SK-N-SH (cell line): ENCODE measurements at regions of chr17 and their contacts with region 1.

Region 1: GRCh38 chr17:36629252-36629847 is 28.0 kb downstream of the MRM1 start:
- DNase-seq: peak; percentile 89
- H3K4me3 ChIP-seq: peak overlapping the region in 1 of 2 experiments; percentile 55; a peak in 1 of 4 replicates
- H3K27ac ChIP-seq: no peak overlapping the region
- H3K4me1 ChIP-seq: peaks cover 0 to 18% of the 10 kb centered on the region in 2 experiments; a peak in 1 of 4 replicates
- H3K27me3 ChIP-seq: no peaks in the 10 kb centered on the region
- CTCF ChIP-seq: peak; percentile 96
- EP300 ChIP-seq: no peak
- RAD21 ChIP-seq: peak; percentile 98

Region 2: DNA sequence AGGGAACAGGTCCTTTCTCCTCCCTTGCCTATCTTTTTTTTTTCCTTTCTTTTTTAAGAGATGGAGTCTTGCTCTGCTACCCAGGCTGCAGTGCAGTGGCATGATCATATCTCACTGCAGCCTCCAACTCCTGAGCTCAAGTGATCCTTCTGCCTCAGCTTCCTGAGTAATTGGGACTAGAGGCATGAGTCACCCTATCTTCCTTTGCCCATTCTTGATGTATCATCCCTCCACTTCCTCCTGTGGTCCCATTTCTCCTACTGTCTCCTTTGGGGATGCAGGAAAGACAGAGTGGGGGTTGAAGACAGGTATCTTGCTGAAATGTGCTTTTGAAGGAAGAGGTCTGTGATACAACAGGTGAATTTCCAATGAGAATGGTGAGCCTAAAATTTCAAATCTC is 100.2 kb before region 1 on chr17:
- CTCF ChIA-PET with region 1: no interaction called
- POLR2A ChIA-PET with region 1: no interaction called
- DNase-seq: no peak
- H3K4me3 ChIP-seq: no peak overlapping the region
- H3K27ac ChIP-seq: peak overlapping the region in 1 of 2 experiments; percentile 43; a peak in 2 of 4 replicates
- H3K4me1 ChIP-seq: peaks cover 0 to 8% of the 10 kb centered on the region in 2 experiments; a peak in 2 of 4 replicates
- H3K27me3 ChIP-seq: no peaks in the 10 kb centered on the region
- CTCF ChIP-seq: no peak
- EP300 ChIP-seq: no peak
- RAD21 ChIP-seq: no peak

Region 3: GRCh38 chr17:36611345-36612072 is 17.8 kb before region 1 on chr17:
- CTCF ChIA-PET with region 1: interaction called, 50 read pairs
- POLR2A ChIA-PET with region 1: no interaction called
- DNase-seq: no peak
- H3K4me3 ChIP-seq: no peak overlapping the region
- H3K27ac ChIP-seq: no peak overlapping the region
- H3K4me1 ChIP-seq: no peaks in the 10 kb centered on the region
- H3K27me3 ChIP-seq: no peaks in the 10 kb centered on the region
- CTCF ChIP-seq: no peak
- EP300 ChIP-seq: no peak
- RAD21 ChIP-seq: no peak

Region 4: DNA sequence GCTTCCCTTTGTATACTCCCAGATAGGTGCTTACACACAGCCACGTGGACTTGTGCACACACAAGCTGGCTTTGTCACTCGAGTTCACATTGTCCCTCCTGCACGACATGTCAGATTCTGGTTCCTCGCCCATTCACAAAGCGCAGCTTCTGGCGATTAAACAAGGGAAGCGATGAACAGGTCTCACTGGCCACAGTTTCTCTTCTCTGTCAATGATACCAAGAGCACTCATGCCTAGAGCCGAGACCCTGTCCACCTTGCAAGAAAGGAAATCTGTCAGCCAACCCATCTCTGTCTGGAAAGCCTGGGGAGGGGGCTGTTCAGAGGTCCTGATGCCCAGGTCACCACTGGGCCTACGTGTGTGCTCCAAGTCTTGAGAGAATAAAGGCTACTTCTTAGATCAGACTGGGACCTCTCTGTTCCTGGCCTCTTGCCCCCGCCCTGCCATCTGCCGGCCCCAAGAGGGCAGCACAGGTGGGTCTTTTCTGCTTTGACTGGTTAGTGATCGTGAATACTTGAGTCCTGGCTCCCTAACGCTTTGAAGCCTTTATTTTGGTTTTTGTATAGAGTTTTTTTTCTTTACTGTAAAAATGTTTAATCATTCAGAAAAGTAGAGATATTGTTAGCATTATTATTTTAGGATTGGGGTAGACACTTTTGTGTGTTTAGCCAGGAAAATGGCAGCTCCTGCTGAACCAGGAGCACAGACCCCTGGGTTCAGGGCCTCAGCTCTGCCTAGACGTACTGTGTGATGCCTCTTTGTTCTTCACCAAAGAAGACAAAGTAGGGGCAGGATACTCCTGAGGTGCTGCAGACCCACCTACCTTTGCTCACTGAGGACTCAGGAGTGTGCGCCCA is 76.8 kb after region 1 on chr17:
- CTCF ChIA-PET with region 1: interaction called, 23 read pairs
- POLR2A ChIA-PET with region 1: no interaction called
- DNase-seq: peak; percentile 86
- H3K4me3 ChIP-seq: no peak overlapping the region
- H3K27ac ChIP-seq: no peak overlapping the region
- H3K4me1 ChIP-seq: peaks cover 0 to 2% of the 10 kb centered on the region in 2 experiments; a peak in 1 of 4 replicates
- H3K27me3 ChIP-seq: no peaks in the 10 kb centered on the region; the same call in 1 of the 2 replicates
- CTCF ChIP-seq: peak; percentile 67
- EP300 ChIP-seq: no peak
- RAD21 ChIP-seq: peak; percentile 87

Region 5: GRCh38 chr17:37174205-37174604 is 544.9 kb after region 1 on chr17:
- CTCF ChIA-PET with region 1: interaction called, 20 read pairs
- POLR2A ChIA-PET with region 1: no interaction called
- DNase-seq: peak; percentile 61
- H3K4me3 ChIP-seq: no peak overlapping the region
- H3K27ac ChIP-seq: no peak overlapping the region
- H3K4me1 ChIP-seq: peaks cover 0 to 14% of the 10 kb centered on the region in 2 experiments; a peak in 3 of 4 replicates
- H3K27me3 ChIP-seq: no peaks in the 10 kb centered on the region
- CTCF ChIP-seq: peak; percentile 42
- EP300 ChIP-seq: no peak
- RAD21 ChIP-seq: peak; percentile 91

Region 6: DNA sequence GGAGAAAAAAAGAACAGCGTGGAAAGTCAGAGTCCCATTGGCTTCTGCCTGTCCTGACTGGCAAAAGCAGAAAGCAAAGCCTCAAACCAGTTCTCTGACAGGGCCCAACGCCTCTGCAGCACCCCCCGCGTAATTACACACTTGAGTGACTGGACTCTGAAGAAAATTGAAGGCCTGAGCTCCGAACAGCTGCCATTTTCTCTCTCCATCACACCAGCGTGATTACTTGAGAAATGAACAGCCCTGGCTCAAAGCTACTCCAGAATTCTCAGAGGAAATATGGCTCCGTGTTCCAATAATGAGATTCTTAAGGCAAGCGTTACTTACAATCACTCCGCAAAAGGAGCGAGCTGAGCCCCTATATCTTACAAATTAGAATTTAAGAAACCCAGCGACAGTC is 603.7 kb after region 1 on chr17:
- CTCF ChIA-PET with region 1: interaction called, 10 read pairs
- POLR2A ChIA-PET with region 1: no interaction called
- DNase-seq: no peak
- H3K4me3 ChIP-seq: no peak overlapping the region
- H3K27ac ChIP-seq: no peak overlapping the region
- H3K4me1 ChIP-seq: no peaks in the 10 kb centered on the region
- H3K27me3 ChIP-seq: no peaks in the 10 kb centered on the region
- CTCF ChIP-seq: no peak
- EP300 ChIP-seq: no peak
- RAD21 ChIP-seq: no peak